ENCODE measurements at regions of chr6 and their contacts with region 1.

Region 1: DNA sequence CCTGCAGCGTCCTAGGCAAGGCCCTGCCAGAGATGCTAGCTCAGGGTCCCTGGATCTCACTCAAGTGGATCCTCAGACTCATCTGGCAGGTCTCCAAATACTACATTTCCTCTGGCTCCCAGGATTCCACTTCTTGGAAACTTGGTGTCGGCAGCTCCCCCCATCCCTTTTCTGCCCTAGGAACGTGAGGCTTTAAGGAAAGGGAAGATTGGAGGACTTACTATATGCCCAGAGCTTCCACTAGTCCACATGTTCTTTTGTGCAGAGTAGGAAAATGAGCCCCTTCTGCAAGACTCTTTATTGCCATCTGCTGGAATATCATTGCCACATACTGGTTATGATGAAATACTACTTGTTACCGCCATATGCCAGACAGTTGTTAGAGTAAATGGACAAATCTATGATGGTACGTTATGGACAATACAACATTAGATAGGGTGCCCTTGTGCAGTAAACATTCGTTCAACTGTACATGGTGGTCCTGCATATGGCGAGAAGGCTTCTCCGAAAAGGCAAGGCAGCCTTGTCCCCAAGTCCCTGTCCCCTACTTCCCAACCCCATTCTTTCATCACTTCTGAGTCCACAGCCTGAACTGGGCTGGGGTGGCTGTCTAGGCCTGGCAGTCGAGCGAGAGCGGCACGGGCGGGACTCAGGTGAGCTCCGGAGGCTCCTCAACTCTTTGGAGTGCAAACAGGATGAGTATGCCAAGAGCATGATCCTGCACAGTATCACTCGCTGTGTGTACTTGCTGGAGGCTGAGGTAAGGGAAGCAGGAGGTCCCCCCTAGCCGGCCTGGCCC is 780 bp downstream of the ARMC12 start:
- DNase-seq: no peak
- H3K4me3 ChIP-seq: no peak overlapping the region
- H3K27ac ChIP-seq: no peak overlapping the region
- H3K4me1 ChIP-seq: peaks cover 5 to 23% of the 10 kb centered on the region in 2 donors
- H3K27me3 ChIP-seq: no peaks in the 10 kb centered on the region
- CTCF ChIP-seq: peak; percentile 78 to 96 (median 84)

Region 2: GRCh38 chr6:34284563-34285447 is 1452.8 kb before region 1 on chr6:
- intact Hi-C with region 1: no loop called
- DNase-seq: peak; percentile 10 to 68
- H3K4me3 ChIP-seq: no peak overlapping the region
- H3K27ac ChIP-seq: no peak overlapping the region
- H3K4me1 ChIP-seq: peaks cover 0 to 2% of the 10 kb centered on the region in 2 donors
- H3K27me3 ChIP-seq: no peaks in the 10 kb centered on the region
- CTCF ChIP-seq: no peak

Region 3: GRCh38 chr6:35522660-35523658 is 214.7 kb before region 1 on chr6:
- intact Hi-C with region 1: loop called (anchors 1 kb)
- DNase-seq: peak; percentile 10 to 83
- H3K4me3 ChIP-seq: peak overlapping the region; percentile 30 to 49
- H3K27ac ChIP-seq: no peak overlapping the region
- H3K4me1 ChIP-seq: peaks cover 0 to 3% of the 10 kb centered on the region in 2 donors
- H3K27me3 ChIP-seq: no peaks in the 10 kb centered on the region
- CTCF ChIP-seq: peak; percentile 91 to 100 (median 99)